RWPE1 (cell line): ENCODE measurements at regions of chr7 and their contacts with region 1.

Region 1: DNA sequence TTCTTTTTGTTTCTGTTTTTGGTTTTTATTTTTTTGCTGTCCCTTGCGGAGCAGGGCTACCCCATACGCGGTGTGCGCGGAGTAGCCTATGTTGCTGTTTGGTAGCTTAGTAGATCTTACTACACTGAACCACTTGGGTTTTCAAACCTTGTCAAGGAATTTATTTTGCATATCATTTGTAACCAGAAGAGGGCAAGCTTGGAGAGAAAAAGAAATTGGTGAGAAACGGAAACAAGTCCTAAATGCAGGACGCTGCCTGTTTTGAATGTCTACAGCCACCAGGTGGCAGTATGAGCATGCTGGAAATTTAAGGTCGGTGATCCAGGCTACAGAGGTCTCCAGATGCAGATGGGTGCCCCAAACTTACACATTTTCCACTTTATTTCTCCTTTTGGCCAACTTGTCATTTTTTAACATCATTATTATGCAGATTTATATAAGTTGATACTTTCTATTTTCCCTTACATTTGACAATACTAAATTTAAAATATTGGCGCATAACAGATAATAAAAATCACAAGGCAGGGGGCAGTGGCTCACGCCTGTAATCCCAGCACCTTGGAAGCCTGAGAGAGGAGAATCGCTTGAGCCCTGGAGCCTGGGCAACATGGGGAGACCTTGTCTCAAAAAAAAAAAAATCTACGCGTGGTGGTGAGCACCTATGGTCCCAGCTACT is 15.3 kb upstream of the TRA2A start:
- DNase-seq: peak; percentile 84
- H3K27ac ChIP-seq: no peak overlapping the region
- CTCF ChIP-seq: peak; percentile 99

Region 2: GRCh38 chr7:23273141-23273599 is 273.9 kb before region 1 on chr7:
- CTCF ChIA-PET with region 1: interaction called, 10 read pairs
- POLR2A ChIA-PET with region 1: no interaction called
- DNase-seq: peak; percentile 86
- H3K27ac ChIP-seq: 0 out of 2 replicates have a peak overlapping the region, but pooled peaks have one; percentile 14
- CTCF ChIP-seq: peak; percentile 94

Region 3: GRCh38 chr7:23712368-23713284 is 165.6 kb after region 1 on chr7:
- CTCF ChIA-PET with region 1: interaction called, 15 read pairs
- POLR2A ChIA-PET with region 1: no interaction called
- DNase-seq: peak; percentile 67
- H3K27ac ChIP-seq: no peak overlapping the region
- CTCF ChIP-seq: peak; percentile 55